Pancreas (tissue), 10 donors: ENCODE measurements at regions of chr5 and their contacts with region 1.

Region 1: DNA sequence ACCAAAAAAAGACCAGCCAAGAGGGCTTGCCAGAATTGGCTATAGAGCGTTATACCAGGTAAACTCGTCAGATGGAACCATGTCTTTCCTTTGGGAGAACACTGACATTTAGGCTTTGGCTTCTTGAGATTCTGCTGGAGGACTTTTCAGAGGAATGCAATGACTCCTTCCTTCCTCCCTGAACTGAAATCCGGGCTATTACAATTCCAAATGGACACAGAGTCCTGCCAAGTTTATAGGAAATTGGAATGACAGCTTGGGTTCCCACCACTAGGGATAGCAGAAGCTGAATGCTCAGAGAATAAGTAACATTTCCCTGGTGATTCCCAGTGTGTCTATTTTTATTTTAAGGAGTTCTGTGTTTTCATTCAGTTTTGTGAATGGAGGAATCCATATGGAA is 143.0 kb downstream of the FGF1 start:
- DNase-seq: no peak
- ATAC-seq: no peak
- H3K4me3 ChIP-seq: no peak overlapping the region
- H3K27ac ChIP-seq: no peak overlapping the region
- H3K4me1 ChIP-seq: no peaks in the 10 kb centered on the region
- H3K27me3 ChIP-seq: no peaks in the 10 kb centered on the region
- CTCF ChIP-seq: no peak

Region 2: DNA sequence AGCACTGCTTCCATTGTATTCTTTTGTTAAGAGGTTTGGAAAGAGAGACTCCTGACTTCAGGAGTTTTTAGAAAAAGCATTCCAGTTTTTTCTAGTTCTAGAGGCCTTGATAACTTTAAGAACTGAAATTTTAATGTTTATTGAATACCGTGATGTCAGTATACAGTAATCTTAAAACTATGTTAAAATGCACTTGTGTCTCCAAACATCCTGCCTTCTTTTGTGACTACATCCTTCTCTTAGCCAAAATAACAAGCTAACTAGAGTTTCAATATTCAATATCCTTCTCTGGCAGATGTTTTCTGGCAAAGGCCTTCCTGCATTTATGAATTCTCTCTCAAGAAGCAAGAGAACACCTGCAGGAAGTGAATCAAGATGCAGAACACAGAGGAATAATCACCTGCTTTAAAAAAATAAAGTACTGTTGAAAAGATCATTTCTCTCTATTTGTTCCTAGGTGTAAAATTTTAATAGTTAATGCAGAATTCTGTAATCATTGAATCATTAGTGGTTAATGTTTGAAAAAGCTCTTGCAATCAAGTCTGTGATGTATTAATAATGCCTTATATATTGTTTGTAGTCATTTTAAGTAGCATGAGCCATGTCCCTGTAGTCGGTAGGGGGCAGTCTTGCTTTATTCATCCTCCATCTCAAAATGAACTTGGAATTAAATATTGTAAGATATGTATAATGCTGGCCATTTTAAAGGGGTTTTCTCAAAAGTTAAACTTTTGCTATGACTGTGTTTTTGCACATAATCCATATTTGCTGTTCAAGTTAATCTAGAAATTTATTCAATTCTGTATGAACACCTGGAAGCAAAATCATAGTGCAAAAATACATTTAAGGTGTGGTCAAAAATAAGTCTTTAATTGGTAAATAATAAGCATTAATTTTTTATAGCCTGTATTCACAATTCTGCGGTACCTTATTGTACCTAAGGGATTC is 391.2 kb before region 1 on chr5:
- intact Hi-C with region 1: loop called in 1 of 3 experiments (anchors 5 kb)
- DNase-seq: peak in 2 of 6 donors; percentile 7 to 34
- ATAC-seq: peak in 3 of 4 donors; percentile 75 to 81 (median 80)
- H3K4me3 ChIP-seq: no peak overlapping the region
- H3K27ac ChIP-seq: no peak overlapping the region
- H3K4me1 ChIP-seq: no peaks in the 10 kb centered on the region
- H3K27me3 ChIP-seq: no peaks in the 10 kb centered on the region
- CTCF ChIP-seq: peak; percentile 44 to 66 (median 54)

Region 3: GRCh38 chr5:142655339-142656267 is 112.7 kb after region 1 on chr5:
- intact Hi-C with region 1: no loop called
- DNase-seq: peak; percentile 56 to 94 (median 82)
- ATAC-seq: peak; percentile 85 to 98 (median 96)
- H3K4me3 ChIP-seq: no peak overlapping the region
- H3K27ac ChIP-seq: no peak overlapping the region
- H3K4me1 ChIP-seq: no peaks in the 10 kb centered on the region
- H3K27me3 ChIP-seq: no peaks in the 10 kb centered on the region
- CTCF ChIP-seq: peak; percentile 80 to 97 (median 94)